GM12878 (cell line): ENCODE measurements at regions of chr2 and their contacts with region 1.

Region 1: DNA sequence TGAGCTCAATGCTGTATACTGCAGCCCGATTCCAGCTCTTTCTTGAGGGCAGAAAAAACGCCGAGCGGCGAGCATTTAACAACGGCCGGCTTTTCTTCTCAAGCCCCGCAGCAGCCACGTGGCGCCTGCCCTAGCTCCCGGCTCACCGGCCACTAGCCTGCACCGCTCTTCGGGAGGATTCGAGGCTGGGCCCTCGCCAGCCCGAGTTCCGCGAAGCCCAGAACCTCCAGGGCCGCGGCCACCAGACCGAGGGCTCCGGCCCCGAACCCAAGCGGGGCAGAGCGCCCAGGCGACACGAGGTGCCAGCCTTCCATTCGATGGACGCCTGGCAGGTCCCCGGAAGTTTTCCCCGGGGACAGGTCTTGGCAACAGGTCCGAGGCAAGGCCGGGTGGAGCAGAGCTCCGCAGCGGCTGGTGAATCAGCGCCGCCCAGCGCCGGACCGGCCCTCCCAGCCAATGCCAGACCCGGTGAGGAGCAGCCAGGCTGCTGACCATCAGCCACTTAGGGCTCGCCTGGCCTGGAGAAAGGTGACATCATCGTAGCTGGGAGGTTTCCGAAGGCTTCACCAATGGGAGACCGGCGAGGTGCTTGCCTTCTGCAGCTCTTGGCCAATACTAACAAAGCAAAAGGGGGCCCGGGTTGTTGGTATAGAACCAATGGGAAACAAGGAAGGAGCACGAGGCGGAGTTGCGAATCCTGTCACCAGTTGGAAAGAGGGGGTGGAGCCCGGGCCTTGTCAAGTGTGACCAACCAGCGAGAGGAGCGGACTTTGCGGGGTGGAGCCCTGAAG is 544 bp upstream of the MXD1 start:
- DNase-seq: peak; percentile 100
- ATAC-seq: peak; percentile 93
- H3K4me3 ChIP-seq: peak overlapping the region; percentile 68
- H3K27ac ChIP-seq: peak overlapping the region; percentile 86
- H3K4me1 ChIP-seq: peaks cover 8% of the 10 kb centered on the region; the same call in 1 of the 2 replicates
- H3K27me3 ChIP-seq: no peaks in the 10 kb centered on the region
- CTCF ChIP-seq: peak in 1 of 3 experiments; percentile 48; a peak in 2 of 6 replicates
- EP300 ChIP-seq: no peak
- POLR2A ChIP-seq: peak; percentile 85
- RAD21 ChIP-seq: 0 out of 2 replicates have a peak, but pooled peaks have one; percentile 1

Region 2: DNA sequence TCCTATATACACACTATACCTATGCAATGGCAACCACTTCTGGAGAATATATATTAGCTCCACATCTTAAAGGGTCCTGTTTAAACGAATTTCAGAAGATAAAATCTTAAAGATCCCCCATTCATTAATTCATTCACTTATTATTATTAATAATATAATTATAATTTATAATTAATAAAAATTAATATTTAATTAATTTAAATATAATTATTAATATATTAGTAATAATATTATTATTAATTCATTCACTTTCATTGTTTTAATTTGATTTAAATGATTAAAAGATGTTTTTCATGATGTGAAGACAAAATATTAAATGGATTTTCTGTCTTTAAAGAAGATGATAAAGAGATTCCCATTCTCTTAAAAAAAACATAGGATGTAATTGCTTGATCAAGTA is 498.2 kb before region 1 on chr2:
- CTCF ChIA-PET with region 1: no interaction called
- POLR2A ChIA-PET with region 1: no interaction called
- RAD21 ChIA-PET with region 1: no interaction called
- SMC1A ChIA-PET with region 1: no interaction called
- in situ Hi-C with region 1: no loop called
- intact Hi-C with region 1: no loop called
- DNase-seq: no peak
- ATAC-seq: no peak
- H3K4me3 ChIP-seq: no peak overlapping the region
- H3K27ac ChIP-seq: no peak overlapping the region
- H3K4me1 ChIP-seq: no peaks in the 10 kb centered on the region
- H3K27me3 ChIP-seq: no peaks in the 10 kb centered on the region
- CTCF ChIP-seq: no peak
- EP300 ChIP-seq: no peak
- POLR2A ChIP-seq: no peak
- RAD21 ChIP-seq: no peak

Region 3: GRCh38 chr2:69893684-69894551 is 20.4 kb before region 1 on chr2 and contains the start of gene SNRNP27:
- CTCF ChIA-PET with region 1: interaction called, 34 read pairs
- POLR2A ChIA-PET with region 1: interaction called, 10 read pairs
- RAD21 ChIA-PET with region 1: interaction called, 6 read pairs
- SMC1A ChIA-PET with region 1: interaction called, 34 read pairs
- in situ Hi-C with region 1: no loop called
- intact Hi-C with region 1: no loop called
- DNase-seq: peak; percentile 20
- ATAC-seq: peak; percentile 90
- H3K4me3 ChIP-seq: peak within 1 kb of the TSS; percentile 89
- H3K27ac ChIP-seq: peak within 1 kb of the TSS; percentile 85
- H3K4me1 ChIP-seq: 0 out of 2 replicates have a peak, but pooled peaks cover 3% of the 10 kb centered on the region
- H3K27me3 ChIP-seq: no peaks in the 10 kb centered on the region
- CTCF ChIP-seq: no peak
- EP300 ChIP-seq: no peak; a peak in 1 of 4 replicates
- POLR2A ChIP-seq: peak; percentile 80
- RAD21 ChIP-seq: no peak
- polyA plus RNA-seq, gene SNRNP27: 30.6 to 30.9 TPM

Region 4: DNA sequence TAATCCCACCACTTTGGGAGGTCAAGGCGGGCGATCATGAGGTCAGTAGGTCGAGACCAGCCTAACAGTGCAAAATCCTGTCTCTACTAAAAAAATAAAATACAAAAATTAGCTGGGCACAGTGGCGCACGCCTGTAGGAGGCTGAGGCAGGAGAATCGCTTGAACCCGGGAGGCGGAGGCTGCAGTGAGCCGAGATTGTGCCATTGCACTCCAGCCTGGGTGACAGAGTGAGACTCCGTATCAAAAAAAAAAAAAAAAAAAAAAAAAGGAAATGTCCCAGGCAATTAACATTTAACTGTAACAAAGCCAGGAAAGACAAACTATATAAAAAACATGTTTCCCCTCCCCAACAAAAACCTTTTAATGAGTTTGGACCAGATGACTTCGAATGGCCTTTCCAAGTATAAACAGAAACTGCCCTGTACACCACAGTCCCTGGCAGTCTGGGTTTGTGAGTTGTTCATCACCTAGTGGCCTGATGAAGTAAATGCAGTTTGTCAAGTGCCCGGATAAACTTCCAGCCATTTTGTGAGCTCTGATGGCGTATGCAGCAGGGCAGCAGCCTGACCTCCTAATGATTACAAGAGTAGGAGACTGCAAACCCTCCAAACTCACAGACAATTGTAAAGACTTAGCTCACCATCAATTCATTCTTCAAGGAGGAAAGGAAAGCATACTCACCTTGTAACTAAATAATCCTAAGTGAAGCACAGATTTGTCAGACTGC is 156.3 kb after region 1 on chr2:
- CTCF ChIA-PET with region 1: interaction called, 97 read pairs
- POLR2A ChIA-PET with region 1: interaction called, 75 read pairs
- RAD21 ChIA-PET with region 1: interaction called, 154 read pairs
- SMC1A ChIA-PET with region 1: interaction called, 126 read pairs
- in situ Hi-C with region 1: loop called (anchors 5 kb)
- intact Hi-C with region 1: loop called (anchors 1 kb)
- DNase-seq: no peak
- ATAC-seq: peak; percentile 86
- H3K4me3 ChIP-seq: no peak overlapping the region
- H3K27ac ChIP-seq: peak overlapping the region; percentile 89
- H3K4me1 ChIP-seq: peaks cover 18% of the 10 kb centered on the region
- H3K27me3 ChIP-seq: no peaks in the 10 kb centered on the region
- CTCF ChIP-seq: peak; percentile 80 to 90 (median 86)
- EP300 ChIP-seq: no peak
- POLR2A ChIP-seq: peak; percentile 37; the same call in 1 of the 2 replicates
- RAD21 ChIP-seq: peak; percentile 90

Region 5: GRCh38 chr2:70115646-70116442 is 201.5 kb after region 1 on chr2:
- CTCF ChIA-PET with region 1: interaction called, 5 read pairs
- POLR2A ChIA-PET with region 1: interaction called, 7 read pairs
- RAD21 ChIA-PET with region 1: interaction called, 16 read pairs
- SMC1A ChIA-PET with region 1: interaction called, 3 read pairs
- in situ Hi-C with region 1: no loop called
- intact Hi-C with region 1: no loop called
- DNase-seq: no peak
- ATAC-seq: peak; percentile 78
- H3K4me3 ChIP-seq: peak overlapping the region; percentile 30; the same call in 1 of the 2 replicates
- H3K27ac ChIP-seq: peak overlapping the region; percentile 88
- H3K4me1 ChIP-seq: peaks cover 51% of the 10 kb centered on the region
- H3K27me3 ChIP-seq: no peaks in the 10 kb centered on the region
- CTCF ChIP-seq: peak in 1 of 3 experiments; percentile 27; a peak in 2 of 6 replicates
- EP300 ChIP-seq: 0 out of 4 replicates have a peak, but pooled peaks of 1 of the 2 experiments have one; percentile 34
- POLR2A ChIP-seq: no peak
- RAD21 ChIP-seq: no peak

Region 6: GRCh38 chr2:70142590-70143313 is 228.4 kb after region 1 on chr2:
- CTCF ChIA-PET with region 1: interaction called, 111 read pairs
- POLR2A ChIA-PET with region 1: interaction called, 60 read pairs
- RAD21 ChIA-PET with region 1: interaction called, 132 read pairs
- SMC1A ChIA-PET with region 1: interaction called, 116 read pairs
- in situ Hi-C with region 1: loop called (anchors 5 kb)
- intact Hi-C with region 1: loop called (anchors 1 kb)
- DNase-seq: peak; percentile 98
- ATAC-seq: peak; percentile 71
- H3K4me3 ChIP-seq: peak overlapping the region; percentile 60
- H3K27ac ChIP-seq: peak overlapping the region; percentile 97
- H3K4me1 ChIP-seq: peaks cover 38% of the 10 kb centered on the region
- H3K27me3 ChIP-seq: no peaks in the 10 kb centered on the region
- CTCF ChIP-seq: peak; percentile 97 to 100 (median 97); a peak in 5 of 6 replicates
- EP300 ChIP-seq: peak; percentile 35 to 94; a peak in 2 of 4 replicates
- POLR2A ChIP-seq: peak; percentile 26; the same call in 1 of the 2 replicates
- RAD21 ChIP-seq: peak; percentile 91

Region 7: DNA sequence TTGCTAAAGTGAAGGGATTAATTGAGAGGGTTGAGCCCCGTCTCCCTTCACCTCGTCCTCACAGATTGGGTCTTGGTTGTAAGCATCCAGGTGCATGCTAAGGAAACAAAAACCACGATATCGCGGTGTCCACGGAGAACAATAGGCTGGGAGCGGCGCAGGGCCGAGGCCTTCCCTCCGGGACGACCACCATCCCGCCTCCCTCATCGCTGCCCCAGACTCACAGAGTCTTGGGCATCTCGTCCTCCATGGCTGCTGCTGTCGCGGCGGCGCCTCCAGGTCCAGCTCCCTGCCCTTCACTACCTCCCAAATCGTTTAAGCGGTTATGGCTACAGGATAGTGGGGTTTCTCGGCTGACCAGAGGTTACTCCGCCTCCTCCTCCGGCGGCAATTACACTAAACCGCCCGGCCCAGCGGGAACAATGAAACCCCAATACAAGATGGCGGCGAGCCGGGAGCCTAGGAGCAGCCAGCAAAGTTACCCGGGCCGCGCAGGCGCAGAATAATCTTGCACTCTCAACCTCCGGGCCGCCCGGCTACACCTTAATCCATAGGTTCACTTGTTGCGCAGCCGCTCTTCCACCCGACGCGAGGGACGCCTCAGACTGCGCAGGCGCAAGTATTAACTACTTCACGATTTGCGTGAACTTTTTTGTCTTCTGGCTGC is 333.9 kb after region 1 on chr2 and contains the start of gene TIA1:
- CTCF ChIA-PET with region 1: interaction called, 4 read pairs
- POLR2A ChIA-PET with region 1: interaction called, 4 read pairs
- RAD21 ChIA-PET with region 1: interaction called, 11 read pairs
- SMC1A ChIA-PET with region 1: interaction called, 5 read pairs
- in situ Hi-C with region 1: no loop called
- intact Hi-C with region 1: loop called (anchors 2 kb)
- DNase-seq: peak; percentile 96
- ATAC-seq: peak; percentile 97
- H3K4me3 ChIP-seq: peak within 1 kb of the TSS; percentile 97
- H3K27ac ChIP-seq: peak within 1 kb of the TSS; percentile 96
- H3K4me1 ChIP-seq: no peaks in the 10 kb centered on the region
- H3K27me3 ChIP-seq: no peaks in the 10 kb centered on the region
- CTCF ChIP-seq: no peak
- EP300 ChIP-seq: no peak
- POLR2A ChIP-seq: peak; percentile 89
- RAD21 ChIP-seq: no peak
- polyA plus RNA-seq, gene TIA1: 21.5 to 23.2 TPM